ENCODE measurements at regions of chr14 and their contacts with region 1.

Region 1: GRCh38 chr14:103281496-103282231 is 52.4 kb upstream of the EIF5 start:
- DNase-seq: peak; percentile 62
- ATAC-seq: peak; percentile 95
- H3K4me3 ChIP-seq: no peak overlapping the region
- H3K27ac ChIP-seq: no peak overlapping the region
- H3K4me1 ChIP-seq: peaks cover 4% of the 10 kb centered on the region; the same call in 1 of the 2 replicates
- H3K27me3 ChIP-seq: peaks cover 50% of the 10 kb centered on the region
- CTCF ChIP-seq: peak; percentile 61
- POLR2A ChIP-seq: no peak
- RAD21 ChIP-seq: peak; percentile 61

Region 2: GRCh38 chr14:103078093-103078749 is 203.4 kb before region 1 on chr14:
- CTCF ChIA-PET with region 1: interaction called, 4 read pairs
- POLR2A ChIA-PET with region 1: no interaction called
- dilution Hi-C with region 1: no loop called
- in situ Hi-C with region 1: no loop called
- intact Hi-C with region 1: loop called (anchors 1 kb)
- DNase-seq: peak; percentile 76
- ATAC-seq: peak; percentile 38; the same call in 1 of the 2 replicates
- H3K4me3 ChIP-seq: no peak overlapping the region
- H3K27ac ChIP-seq: no peak overlapping the region
- H3K4me1 ChIP-seq: peaks cover 2% of the 10 kb centered on the region; the same call in 1 of the 2 replicates
- H3K27me3 ChIP-seq: peaks cover 20% of the 10 kb centered on the region
- CTCF ChIP-seq: peak; percentile 75
- POLR2A ChIP-seq: no peak
- RAD21 ChIP-seq: peak; percentile 64

Region 3: GRCh38 chr14:103313704-103314103 is 32.0 kb after region 1 on chr14:
- CTCF ChIA-PET with region 1: no interaction called
- POLR2A ChIA-PET with region 1: no interaction called
- dilution Hi-C with region 1: no loop called
- in situ Hi-C with region 1: no loop called
- intact Hi-C with region 1: no loop called
- DNase-seq: no peak
- ATAC-seq: no peak
- H3K4me3 ChIP-seq: no peak overlapping the region
- H3K27ac ChIP-seq: no peak overlapping the region
- H3K4me1 ChIP-seq: peaks cover 3% of the 10 kb centered on the region
- H3K27me3 ChIP-seq: peaks cover 3% of the 10 kb centered on the region; the same call in 1 of the 2 replicates
- CTCF ChIP-seq: no peak
- POLR2A ChIP-seq: no peak
- RAD21 ChIP-seq: no peak

Region 4: GRCh38 chr14:103333754-103334643 is 52.3 kb after region 1 on chr14 and contains the start of gene EIF5:
- CTCF ChIA-PET with region 1: no interaction called
- POLR2A ChIA-PET with region 1: interaction called, 15 read pairs
- dilution Hi-C with region 1: no loop called
- in situ Hi-C with region 1: no loop called
- intact Hi-C with region 1: no loop called
- DNase-seq: peak; percentile 98
- ATAC-seq: peak; percentile 89
- H3K4me3 ChIP-seq: peak within 1 kb of the TSS; percentile 83
- H3K27ac ChIP-seq: peak within 1 kb of the TSS; percentile 97
- H3K4me1 ChIP-seq: peaks cover 3% of the 10 kb centered on the region
- H3K27me3 ChIP-seq: no peaks in the 10 kb centered on the region
- CTCF ChIP-seq: peak; percentile 8; the same call in 1 of the 2 replicates
- POLR2A ChIP-seq: peak; percentile 99
- RAD21 ChIP-seq: no peak
- total RNA-seq, gene EIF5: 163 and 241 TPM in 2 replicates

Region 5: DNA sequence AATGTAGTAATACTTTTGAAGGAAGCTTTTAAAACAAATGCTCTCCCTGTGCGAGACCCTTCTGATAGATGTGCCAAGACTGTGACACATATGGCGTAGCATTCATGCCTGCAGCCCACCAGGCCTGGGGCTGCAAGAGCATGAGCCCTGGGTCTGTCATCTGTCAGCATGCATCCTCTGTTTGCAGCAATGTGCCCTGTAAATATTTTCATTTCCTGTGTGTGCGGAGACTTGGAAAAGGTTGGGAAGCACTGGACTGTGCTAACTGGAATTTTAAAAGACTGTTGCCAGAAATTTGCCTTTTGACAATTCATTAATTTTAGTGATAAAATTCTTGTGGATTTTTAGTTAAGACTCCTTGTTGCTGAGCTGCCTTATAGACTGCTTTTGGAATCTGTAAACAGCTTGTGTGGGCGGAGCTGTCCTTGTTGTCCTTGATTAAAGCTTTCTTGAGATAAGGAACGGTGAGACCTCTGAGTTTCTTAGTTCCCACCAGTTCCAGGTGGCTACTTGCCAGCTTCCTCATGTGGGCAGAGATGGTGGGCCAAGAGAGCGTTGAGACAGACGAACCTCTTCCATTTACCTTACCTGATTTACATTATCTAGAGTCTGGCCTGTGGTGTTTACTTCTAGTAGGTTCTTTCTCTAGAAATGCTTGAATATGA is 127.0 kb after region 1 on chr14:
- CTCF ChIA-PET with region 1: no interaction called
- POLR2A ChIA-PET with region 1: interaction called, 27 read pairs
- dilution Hi-C with region 1: no loop called
- in situ Hi-C with region 1: no loop called
- intact Hi-C with region 1: no loop called
- DNase-seq: peak; percentile 13
- ATAC-seq: no peak; the same call in 1 of the 2 replicates
- H3K4me3 ChIP-seq: no peak overlapping the region
- H3K27ac ChIP-seq: no peak overlapping the region
- H3K4me1 ChIP-seq: peaks cover 6% of the 10 kb centered on the region
- H3K27me3 ChIP-seq: no peaks in the 10 kb centered on the region
- CTCF ChIP-seq: no peak
- POLR2A ChIP-seq: no peak
- RAD21 ChIP-seq: no peak